Esophagus muscularis mucosa (tissue), 4 donors: ENCODE measurements at regions of chr10 and their contacts with region 1.

Region 1: DNA sequence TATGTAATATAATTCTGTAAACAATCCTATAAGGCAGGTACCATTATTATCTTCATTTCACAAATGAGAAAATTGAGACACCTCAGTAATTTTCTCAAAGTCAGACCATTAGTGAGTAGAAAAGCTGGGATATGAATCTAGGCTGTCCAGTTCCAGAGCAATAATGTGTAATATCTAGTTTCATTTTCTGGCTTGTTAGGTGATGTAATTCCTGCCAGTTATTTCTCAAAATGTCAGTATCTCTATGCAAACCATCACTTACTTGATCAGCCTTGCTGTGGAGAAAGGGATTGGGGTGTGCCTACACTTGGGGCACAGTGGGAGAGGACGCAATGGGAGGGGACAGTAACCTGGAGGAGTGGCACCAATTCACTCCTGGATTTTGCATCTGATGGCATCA is 157.5 kb downstream of the LYZL1 start:
- DNase-seq: no peak
- H3K4me3 ChIP-seq: no peak overlapping the region
- H3K27ac ChIP-seq: no peak overlapping the region
- H3K4me1 ChIP-seq: peaks cover 9 to 50% (median 39%) of the 10 kb centered on the region in 4 donors
- H3K27me3 ChIP-seq: no peaks in the 10 kb centered on the region
- CTCF ChIP-seq: no peak
- EP300 ChIP-seq: no peak
- POLR2A ChIP-seq: no peak

Region 2: DNA sequence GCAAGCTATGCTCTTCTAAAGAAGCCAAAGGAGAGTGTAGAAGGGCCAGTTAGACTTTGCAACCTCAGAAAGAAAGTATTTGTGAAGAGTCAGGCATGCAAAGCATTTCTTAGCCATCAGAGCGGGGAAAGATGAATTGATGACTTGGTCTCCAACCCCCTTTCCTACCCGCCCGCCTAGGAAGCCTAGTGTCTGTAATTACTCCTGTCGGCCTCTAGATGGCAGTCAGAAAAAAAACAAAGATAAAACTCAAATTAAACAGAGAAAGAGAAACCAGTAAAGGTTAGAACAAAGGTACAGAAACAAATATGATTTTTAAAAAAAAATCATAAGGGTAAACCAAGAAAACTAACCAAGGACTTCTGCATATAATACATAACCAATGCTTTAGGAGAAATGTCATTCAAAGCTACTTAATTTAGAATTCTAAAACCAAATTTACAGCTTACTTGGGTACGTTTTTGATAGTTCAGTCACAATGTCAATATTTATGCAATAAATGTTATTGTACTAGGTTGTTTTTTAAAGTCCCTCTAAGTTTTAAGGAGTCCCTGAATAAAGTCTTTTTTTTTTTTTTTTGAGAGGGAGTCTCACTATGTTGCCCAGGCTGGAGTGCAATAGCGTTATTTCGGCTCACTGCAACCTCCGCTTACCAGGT is 59.9 kb before region 1 on chr10:
- intact Hi-C with region 1: loop called (anchors 5 kb)
- DNase-seq: no peak
- H3K4me3 ChIP-seq: no peak overlapping the region
- H3K27ac ChIP-seq: no peak overlapping the region
- H3K4me1 ChIP-seq: peaks cover 0 to 3% (median under 1%) of the 10 kb centered on the region in 4 donors
- H3K27me3 ChIP-seq: no peaks in the 10 kb centered on the region
- CTCF ChIP-seq: peak; percentile 67 to 86 (median 83)
- EP300 ChIP-seq: no peak
- POLR2A ChIP-seq: no peak

Region 3: GRCh38 chr10:29409241-29410057 is 36.9 kb before region 1 on chr10:
- intact Hi-C with region 1: loop called (anchors 5 kb)
- DNase-seq: no peak
- H3K4me3 ChIP-seq: peak overlapping the region; percentile 67 to 88 (median 80)
- H3K27ac ChIP-seq: peak overlapping the region; percentile 89 to 95 (median 90)
- H3K4me1 ChIP-seq: peaks cover 32 to 50% (median 48%) of the 10 kb centered on the region in 4 donors
- H3K27me3 ChIP-seq: no peaks in the 10 kb centered on the region
- CTCF ChIP-seq: no peak
- EP300 ChIP-seq: no peak
- POLR2A ChIP-seq: no peak

Region 4: DNA sequence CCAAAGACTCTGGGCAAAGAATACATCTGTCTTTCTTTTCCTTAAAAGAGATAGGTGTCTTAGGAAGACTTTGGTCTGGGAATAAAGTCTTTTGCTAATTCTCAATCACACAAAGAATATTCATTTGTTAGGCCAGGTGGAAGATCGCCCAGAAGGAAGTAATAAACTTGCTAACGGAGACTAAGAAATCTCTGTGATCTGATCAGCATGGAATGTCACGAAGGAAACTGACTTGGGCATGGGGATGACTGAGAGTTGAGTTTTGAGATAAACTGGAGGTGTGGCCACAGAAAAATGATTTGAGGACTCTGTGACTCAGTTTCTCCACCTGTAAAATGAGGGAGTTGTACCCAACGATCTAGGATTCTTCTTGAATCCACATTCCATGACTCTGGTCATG is 349.5 kb after region 1 on chr10:
- intact Hi-C with region 1: no loop called
- DNase-seq: no peak
- H3K4me3 ChIP-seq: peak overlapping the region in 1 of 4 donors; percentile 3
- H3K27ac ChIP-seq: peak overlapping the region; percentile 82 to 90 (median 88)
- H3K4me1 ChIP-seq: peaks cover 8 to 55% (median 42%) of the 10 kb centered on the region in 4 donors
- H3K27me3 ChIP-seq: no peaks in the 10 kb centered on the region
- CTCF ChIP-seq: no peak
- EP300 ChIP-seq: no peak
- POLR2A ChIP-seq: no peak